ENCODE measurements at regions of chr1 and their contacts with region 1.

Region 1: GRCh38 chr1:111720274-111720976 is 18.8 kb downstream of the INKA2 start:
- DNase-seq: no peak
- H3K4me3 ChIP-seq: no peak overlapping the region
- H3K27ac ChIP-seq: peak overlapping the region; percentile 26 to 52 (median 38)
- H3K4me1 ChIP-seq: peaks cover 46 to 53% (median 51%) of the 10 kb centered on the region in 4 donors
- H3K27me3 ChIP-seq: no peaks in the 10 kb centered on the region
- CTCF ChIP-seq: no peak
- EP300 ChIP-seq: no peak
- POLR2A ChIP-seq: no peak

Region 2: GRCh38 chr1:111755331-111756123 is 35.1 kb after region 1 on chr1 and contains the start of gene DDX20:
- intact Hi-C with region 1: loop called (anchors 2 kb)
- DNase-seq: peak; percentile 98
- H3K4me3 ChIP-seq: peak within 1 kb of the TSS; percentile 73 to 87 (median 86)
- H3K27ac ChIP-seq: peak within 1 kb of the TSS; percentile 84 to 95 (median 91)
- H3K4me1 ChIP-seq: peaks cover 17 to 41% (median 24%) of the 10 kb centered on the region in 4 donors
- H3K27me3 ChIP-seq: no peaks in the 10 kb centered on the region
- CTCF ChIP-seq: peak; percentile 89 to 98 (median 95)
- EP300 ChIP-seq: no peak
- POLR2A ChIP-seq: no peak
- total RNA-seq, gene DDX20: 9.5 to 19.9 (median 13.1) TPM

Region 3: GRCh38 chr1:111880881-111881837 is 160.7 kb after region 1 on chr1:
- intact Hi-C with region 1: no loop called
- DNase-seq: no peak
- H3K4me3 ChIP-seq: peak overlapping the region in 3 of 4 donors; percentile 6 to 15 (median 13)
- H3K27ac ChIP-seq: peak overlapping the region; percentile 65 to 75 (median 70)
- H3K4me1 ChIP-seq: peaks cover 48 to 74% (median 71%) of the 10 kb centered on the region in 4 donors
- H3K27me3 ChIP-seq: no peaks in the 10 kb centered on the region
- CTCF ChIP-seq: no peak
- EP300 ChIP-seq: no peak
- POLR2A ChIP-seq: no peak

Measured in esophagus muscularis mucosa (tissue), 4 donors.